Heart left ventricle (tissue), 16 donors: ENCODE measurements at regions of chr13 and their contacts with region 1.

Region 1: DNA sequence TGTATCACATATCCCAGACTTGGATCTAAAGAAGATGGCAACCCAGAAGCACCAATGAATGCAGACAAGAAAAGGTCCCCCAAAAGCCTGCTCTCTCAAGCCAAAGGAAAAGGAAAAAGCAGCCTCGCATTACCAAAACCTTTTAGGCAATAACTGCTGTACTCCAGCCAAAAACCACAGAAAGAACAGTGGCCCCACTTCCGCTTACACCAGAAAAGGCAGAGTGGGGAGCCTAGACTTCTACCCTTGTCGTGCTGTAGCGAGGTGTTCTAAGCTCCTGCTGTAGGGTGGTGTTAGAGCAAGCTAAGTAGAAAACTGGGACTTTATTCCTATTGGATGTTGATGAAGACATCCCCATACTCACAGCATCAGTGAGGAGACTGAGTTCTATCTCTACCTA is 244.0 kb upstream of the RXFP2 start:
- DNase-seq: no peak
- ATAC-seq: no peak
- H3K4me3 ChIP-seq: no peak overlapping the region
- H3K27ac ChIP-seq: no peak overlapping the region
- H3K4me1 ChIP-seq: no peaks in the 10 kb centered on the region
- H3K27me3 ChIP-seq: no peaks in the 10 kb centered on the region
- CTCF ChIP-seq: no peak
- POLR2A ChIP-seq: no peak

Region 2: DNA sequence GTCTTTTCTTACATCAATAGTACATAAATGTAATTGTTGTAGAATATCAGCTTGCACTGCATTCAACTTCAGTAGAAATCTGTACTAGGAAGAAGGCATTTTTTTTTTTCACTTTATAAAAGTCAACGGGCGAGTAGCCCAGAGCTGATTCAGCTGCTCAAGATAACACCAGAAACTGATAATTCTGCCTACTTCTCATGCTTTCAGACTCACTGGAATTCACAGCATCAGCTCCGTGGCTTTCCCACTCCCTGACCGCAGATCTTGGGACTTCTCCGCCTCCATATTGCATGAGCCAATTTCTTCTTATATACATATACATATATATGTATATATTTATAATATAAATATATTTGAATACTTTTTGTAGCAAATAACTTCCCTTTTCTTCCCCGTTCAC is 19.1 kb before region 1 on chr13:
- intact Hi-C with region 1: loop called in 1 of 10 experiments (anchors 2 kb)
- DNase-seq: peak in 1 of 5 donors; percentile 33
- ATAC-seq: peak in 1 of 4 donors; percentile 47
- H3K4me3 ChIP-seq: no peak overlapping the region
- H3K27ac ChIP-seq: no peak overlapping the region
- H3K4me1 ChIP-seq: peaks cover 0 to 17% (median 0%) of the 10 kb centered on the region in 12 donors
- H3K27me3 ChIP-seq: peaks cover 0 to 4% (median 0%) of the 10 kb centered on the region in 9 donors
- CTCF ChIP-seq: no peak
- POLR2A ChIP-seq: no peak

Region 3: DNA sequence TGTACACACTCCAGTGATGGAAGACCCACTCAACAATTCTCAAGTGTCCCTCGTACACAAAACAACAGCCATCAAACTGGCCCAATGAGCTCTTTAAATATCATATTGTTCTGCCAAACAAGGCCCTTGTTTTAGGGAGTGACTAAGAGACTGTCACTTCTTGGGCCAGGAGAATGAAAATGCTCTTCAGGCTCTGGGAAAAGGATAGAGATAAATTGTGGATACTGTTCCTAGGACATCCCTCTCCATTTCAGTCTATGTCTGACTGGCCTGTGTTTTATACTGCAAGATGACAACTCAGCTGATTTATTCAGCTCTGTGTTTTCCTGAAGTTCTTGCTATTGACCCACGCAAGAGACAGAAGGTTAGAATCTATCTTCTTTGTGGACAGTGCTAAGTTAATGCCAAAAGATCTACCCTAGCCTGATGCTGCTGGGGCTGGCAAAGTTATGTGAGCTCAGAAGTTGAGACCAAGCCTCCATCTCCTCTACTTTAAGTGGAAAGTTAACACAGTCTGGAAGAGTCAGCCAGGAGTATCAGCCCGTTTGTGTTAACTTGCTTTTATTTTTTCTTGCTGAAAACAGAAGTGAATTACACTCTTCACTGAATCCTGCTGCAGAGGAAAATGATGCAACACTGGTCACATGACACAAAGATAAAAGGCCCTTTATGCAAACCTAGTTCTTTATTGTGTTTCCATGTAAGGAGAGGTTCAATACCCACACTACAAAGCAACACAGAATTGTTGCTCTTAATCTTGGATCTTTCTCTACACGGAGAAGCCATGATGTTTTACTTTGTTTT is 550.8 kb after region 1 on chr13:
- intact Hi-C with region 1: no loop called
- DNase-seq: no peak
- ATAC-seq: peak; percentile 33 to 61 (median 46)
- H3K4me3 ChIP-seq: no peak overlapping the region
- H3K27ac ChIP-seq: peak overlapping the region in 9 of 12 donors; percentile 22 to 72 (median 33)
- H3K4me1 ChIP-seq: peaks cover 0 to 61% (median 38%) of the 10 kb centered on the region in 12 donors
- H3K27me3 ChIP-seq: no peaks in the 10 kb centered on the region
- CTCF ChIP-seq: no peak
- POLR2A ChIP-seq: no peak